HepG2 (cell line): ENCODE measurements at regions of chr11 and their contacts with region 1.

Region 1: DNA sequence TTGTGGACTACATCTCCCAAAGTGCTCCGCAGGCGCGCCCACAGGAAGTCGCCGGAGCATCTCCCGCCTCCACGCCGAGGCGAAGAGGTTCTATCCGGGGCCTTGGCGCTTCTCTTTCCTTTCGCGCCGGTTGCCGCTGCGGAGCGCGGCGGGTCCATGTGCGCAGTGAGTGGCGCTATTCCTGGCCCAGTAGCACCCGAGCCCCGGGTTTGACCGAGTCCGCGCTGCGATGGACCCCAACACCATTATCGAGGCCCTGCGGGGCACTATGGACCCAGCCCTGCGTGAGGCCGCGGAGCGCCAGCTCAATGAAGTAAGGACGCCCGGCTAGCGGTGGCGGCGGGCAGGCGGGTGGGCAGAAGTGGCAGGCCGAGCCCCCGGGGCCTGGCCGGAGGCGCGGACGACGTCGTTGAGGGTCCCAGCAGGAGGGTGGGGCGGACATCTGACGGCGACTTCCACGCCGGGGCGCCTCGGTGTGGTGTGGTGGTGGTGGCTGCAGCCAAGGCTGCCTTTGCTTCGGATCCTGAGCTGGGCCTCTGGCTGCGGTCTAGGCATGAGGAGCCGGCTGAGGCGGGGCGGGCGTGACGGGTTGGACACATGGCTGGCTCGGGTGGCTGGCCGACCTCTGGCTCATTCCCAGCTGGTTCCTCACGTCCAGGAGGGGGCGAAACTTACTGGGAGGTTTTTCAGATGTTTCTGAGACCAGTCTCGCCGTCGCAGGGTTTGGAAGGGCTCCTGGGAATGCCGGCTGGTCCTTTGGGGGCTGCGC is at the start of gene IPO7:
- DNase-seq: peak; percentile 87
- ATAC-seq: peak; percentile 95
- H3K4me3 ChIP-seq: peak within 1 kb of the TSS; percentile 79 to 96 (median 93)
- H3K27ac ChIP-seq: peak within 1 kb of the TSS; percentile 91
- H3K4me1 ChIP-seq: peaks cover 63% of the 10 kb centered on the region
- H3K27me3 ChIP-seq: no peaks in the 10 kb centered on the region; a peak in 1 of 5 replicates
- CTCF ChIP-seq: peak; percentile 55
- EP300 ChIP-seq: peak in 1 of 2 experiments; percentile 8; a peak in 1 of 4 replicates
- POLR2A ChIP-seq: peak; percentile 92 to 94
- RAD21 ChIP-seq: peak; percentile 28; the same call in 1 of the 2 replicates
- total RNA-seq, gene IPO7: 98.4 and 197 TPM in 2 replicates

Region 2: DNA sequence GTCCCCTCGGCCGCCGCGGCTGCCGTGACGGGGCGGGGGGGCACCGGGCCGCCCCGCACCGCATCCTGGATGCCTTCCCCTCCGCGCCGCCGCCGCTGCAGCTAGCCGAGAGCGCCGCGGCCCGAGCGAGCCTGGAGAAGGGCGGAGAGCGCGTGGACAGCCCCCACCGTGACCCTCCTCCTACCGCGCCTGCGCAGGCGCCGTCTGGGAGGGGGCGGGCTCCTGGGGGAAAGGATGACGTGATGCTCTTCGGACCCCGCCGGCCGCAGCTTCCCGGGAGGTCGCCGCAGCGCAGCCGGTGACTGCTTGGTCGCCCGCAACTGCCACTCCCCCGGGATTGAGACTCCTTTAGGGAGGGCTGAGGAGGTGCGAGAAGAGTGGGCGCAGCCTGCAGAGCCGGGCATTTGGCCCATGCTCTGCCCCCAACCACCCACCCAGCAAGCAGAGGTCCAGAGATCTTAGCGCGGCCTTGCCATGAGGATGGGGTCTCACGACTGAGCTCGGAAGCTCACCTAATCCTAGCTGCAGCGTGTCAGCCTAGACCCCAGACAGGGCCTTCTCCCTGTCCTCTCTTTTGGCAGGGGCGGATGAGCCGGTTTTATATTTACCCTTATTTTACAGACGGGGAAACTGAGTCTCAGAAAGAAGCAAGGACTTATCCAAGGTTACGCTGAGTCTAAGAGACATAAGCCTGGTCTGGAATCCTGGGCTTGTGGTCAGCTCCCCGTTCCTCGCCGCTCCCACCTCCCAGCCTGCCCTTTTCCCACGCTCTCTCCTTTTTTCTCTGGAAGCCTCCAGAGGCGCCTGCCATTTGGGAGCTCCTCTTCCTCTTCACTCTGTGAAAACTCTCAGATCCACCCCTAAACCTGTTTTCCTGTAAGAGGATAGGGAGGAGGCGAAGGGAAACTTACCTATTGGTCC is 119.2 kb before region 1 on chr11 and contains the start of gene DENND5A:
- CTCF ChIA-PET with region 1: no interaction called
- POLR2A ChIA-PET with region 1: interaction called, 15 read pairs
- in situ Hi-C with region 1: no loop called
- intact Hi-C with region 1: loop called (anchors 10 kb)
- DNase-seq: peak; percentile 80
- ATAC-seq: peak; percentile 78
- H3K4me3 ChIP-seq: peak within 1 kb of the TSS; percentile 87 to 96 (median 94)
- H3K27ac ChIP-seq: peak within 1 kb of the TSS; percentile 87
- H3K4me1 ChIP-seq: peaks cover 55% of the 10 kb centered on the region
- H3K27me3 ChIP-seq: no peaks in the 10 kb centered on the region; a peak in 1 of 5 replicates
- CTCF ChIP-seq: peak; percentile 45; the same call in 1 of the 2 replicates
- EP300 ChIP-seq: no peak
- POLR2A ChIP-seq: peak; percentile 65 to 75
- RAD21 ChIP-seq: no peak
- total RNA-seq, gene DENND5A: 57.7 and 63.3 TPM in 2 replicates

Region 3: GRCh38 chr11:9314291-9315036 is 70.3 kb before region 1 on chr11 and contains the start of gene TMEM41B:
- CTCF ChIA-PET with region 1: no interaction called
- POLR2A ChIA-PET with region 1: interaction called, 16 read pairs
- in situ Hi-C with region 1: no loop called
- intact Hi-C with region 1: loop called (anchors 1 kb)
- DNase-seq: peak; percentile 99
- ATAC-seq: peak; percentile 97
- H3K4me3 ChIP-seq: peak within 1 kb of the TSS; percentile 93 to 99 (median 95)
- H3K27ac ChIP-seq: peak within 1 kb of the TSS; percentile 98
- H3K4me1 ChIP-seq: peaks cover 51% of the 10 kb centered on the region
- H3K27me3 ChIP-seq: no peaks in the 10 kb centered on the region; a peak in 2 of 5 replicates
- CTCF ChIP-seq: peak; percentile 29; the same call in 1 of the 2 replicates
- EP300 ChIP-seq: no peak; a peak in 1 of 4 replicates
- POLR2A ChIP-seq: peak; percentile 82 to 90
- RAD21 ChIP-seq: peak; percentile 13; the same call in 1 of the 2 replicates
- total RNA-seq, gene TMEM41B: 18.8 and 36.8 TPM in 2 replicates

Region 4: DNA sequence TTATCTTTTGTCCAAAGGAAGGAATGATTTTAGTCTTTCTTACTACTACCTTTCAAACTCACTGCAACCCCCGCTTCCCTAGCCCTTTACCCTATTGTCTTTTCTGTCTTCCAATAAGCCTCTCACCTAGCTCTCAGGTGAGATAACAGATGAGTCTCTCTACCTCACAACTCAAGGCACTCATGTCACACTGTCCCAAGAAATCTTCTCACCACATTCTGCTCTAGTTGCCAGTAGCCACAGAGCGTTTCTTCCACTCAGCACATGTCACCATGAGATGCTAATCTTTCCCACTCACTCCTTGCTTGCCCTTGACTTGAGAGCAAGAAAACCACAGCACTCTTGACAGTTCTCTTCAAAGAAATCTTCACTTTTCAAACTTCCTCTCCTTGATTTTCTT is 37.6 kb before region 1 on chr11:
- CTCF ChIA-PET with region 1: no interaction called
- POLR2A ChIA-PET with region 1: interaction called, 11 read pairs
- in situ Hi-C with region 1: no loop called
- intact Hi-C with region 1: no loop called
- DNase-seq: no peak
- ATAC-seq: no peak
- H3K4me3 ChIP-seq: no peak overlapping the region
- H3K27ac ChIP-seq: no peak overlapping the region
- H3K4me1 ChIP-seq: peaks cover 26% of the 10 kb centered on the region
- H3K27me3 ChIP-seq: no peaks in the 10 kb centered on the region; a peak in 2 of 5 replicates
- CTCF ChIP-seq: no peak
- EP300 ChIP-seq: no peak
- POLR2A ChIP-seq: no peak
- RAD21 ChIP-seq: no peak

Region 5: DNA sequence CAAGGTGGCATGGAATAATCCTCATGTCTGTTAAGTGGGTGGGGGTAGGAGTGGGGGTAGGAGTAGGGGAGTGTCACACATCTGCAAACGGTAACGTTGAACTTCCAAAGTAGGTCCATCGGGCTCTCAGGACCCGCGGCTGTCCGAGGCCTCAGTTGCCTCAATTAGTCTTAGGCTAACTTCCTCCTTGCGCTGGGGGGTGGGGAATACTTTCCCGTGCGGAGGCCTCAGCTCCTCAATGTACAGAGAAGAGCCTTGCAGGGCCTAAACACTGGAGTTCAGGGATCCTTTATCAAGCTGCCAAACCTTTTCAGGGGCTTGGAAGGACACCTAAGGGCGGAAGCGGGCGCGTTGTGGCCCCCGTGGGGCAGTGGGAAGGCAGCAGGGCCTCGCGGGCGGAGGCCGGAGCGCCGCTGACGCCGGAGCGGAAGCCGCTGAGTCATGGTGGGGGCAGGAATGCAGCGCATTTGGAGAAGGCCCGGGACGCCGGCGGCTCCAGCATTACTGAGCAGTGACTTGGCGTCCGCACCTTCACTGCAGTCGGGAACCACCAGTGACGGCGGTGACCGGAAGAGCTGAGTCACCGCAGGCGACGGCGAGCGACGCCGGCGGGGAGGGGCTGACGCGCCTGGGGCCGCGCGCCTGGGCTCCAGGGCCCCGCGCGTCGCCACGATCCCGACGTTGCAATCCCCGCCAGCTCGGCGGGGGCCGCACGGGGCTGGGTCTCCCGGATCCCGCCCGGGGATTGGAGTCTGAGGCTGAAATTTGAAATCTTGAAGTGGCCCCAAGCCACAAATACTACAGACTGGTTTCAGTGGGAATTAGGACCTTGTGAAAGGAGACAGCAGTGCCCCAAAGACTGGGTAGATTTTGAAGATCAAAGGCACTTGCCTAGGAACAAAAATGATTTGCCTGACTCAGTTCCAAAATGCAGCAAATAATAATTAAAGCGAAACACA is 20.5 kb before region 1 on chr11:
- CTCF ChIA-PET with region 1: no interaction called
- POLR2A ChIA-PET with region 1: interaction called, 59 read pairs
- in situ Hi-C with region 1: no loop called
- intact Hi-C with region 1: loop called (anchors 1 kb)
- DNase-seq: peak; percentile 94
- ATAC-seq: peak; percentile 96
- H3K4me3 ChIP-seq: peak overlapping the region; percentile 64 to 76 (median 68)
- H3K27ac ChIP-seq: peak overlapping the region; percentile 99
- H3K4me1 ChIP-seq: peaks cover 34% of the 10 kb centered on the region
- H3K27me3 ChIP-seq: no peaks in the 10 kb centered on the region
- CTCF ChIP-seq: peak; percentile 39
- EP300 ChIP-seq: peak; percentile 65 to 68
- POLR2A ChIP-seq: peak; percentile 74 to 78
- RAD21 ChIP-seq: peak; percentile 44; the same call in 1 of the 2 replicates

Region 6: DNA sequence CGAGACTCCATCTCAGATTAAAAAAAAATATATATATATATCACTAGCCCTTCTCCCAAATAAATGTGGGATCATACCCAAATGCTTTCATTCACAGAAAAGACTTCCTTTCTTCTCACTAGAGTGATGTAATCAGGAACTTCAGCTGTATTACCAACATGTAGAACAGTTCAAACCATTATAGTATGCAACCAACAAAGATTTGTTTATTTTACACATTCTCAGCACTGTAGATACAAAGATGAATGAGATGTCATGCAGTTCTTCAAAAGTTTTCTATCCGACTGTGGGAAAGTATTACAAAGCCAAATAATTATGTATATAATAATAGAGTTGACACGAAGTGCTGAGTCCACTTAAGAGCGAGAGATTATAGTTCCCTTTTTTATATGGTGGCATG is 53.9 kb after region 1 on chr11:
- CTCF ChIA-PET with region 1: no interaction called
- POLR2A ChIA-PET with region 1: no interaction called
- in situ Hi-C with region 1: no loop called
- intact Hi-C with region 1: no loop called
- DNase-seq: no peak
- ATAC-seq: no peak
- H3K4me3 ChIP-seq: no peak overlapping the region
- H3K27ac ChIP-seq: no peak overlapping the region
- H3K4me1 ChIP-seq: no peaks in the 10 kb centered on the region
- H3K27me3 ChIP-seq: no peaks in the 10 kb centered on the region
- CTCF ChIP-seq: no peak
- EP300 ChIP-seq: no peak
- POLR2A ChIP-seq: no peak
- RAD21 ChIP-seq: no peak